Activated naive CD4-positive, alpha-beta T cell treated with anti-CD3 and anti-CD28 coated beads, Interleukin-2, amount 10 ng/mL, durations not matched to agents 7 days and 5 days (primary cell): ENCODE measurements at regions of chr15 and their contacts with region 1.

Region 1: GRCh38 chr15:40440743-40441564 is at the start of gene BAHD1:
- DNase-seq: peak; percentile 98
- H3K4me3 Mint-ChIP-seq: peak within 1 kb of the TSS; percentile 90
- H3K27ac Mint-ChIP-seq: peak within 1 kb of the TSS; percentile 74
- H3K4me1 Mint-ChIP-seq: peaks cover 52% of the 10 kb centered on the region
- H3K27me3 Mint-ChIP-seq: peaks cover 70% of the 10 kb centered on the region

Region 2: GRCh38 chr15:40454904-40455391 is 14.0 kb after region 1 on chr15:
- CTCF ChIA-PET with region 1: interaction called, 19 read pairs
- DNase-seq: peak; percentile 51
- H3K4me3 Mint-ChIP-seq: peak overlapping the region; percentile 62
- H3K27ac Mint-ChIP-seq: peak overlapping the region; percentile 90
- H3K4me1 Mint-ChIP-seq: peaks cover 75% of the 10 kb centered on the region
- H3K27me3 Mint-ChIP-seq: no peaks in the 10 kb centered on the region

Region 3: GRCh38 chr15:40506964-40507571 is 66.1 kb after region 1 on chr15:
- CTCF ChIA-PET with region 1: interaction called, 11 read pairs
- DNase-seq: peak; percentile 78
- H3K4me3 Mint-ChIP-seq: peak overlapping the region; percentile 21
- H3K27ac Mint-ChIP-seq: no peak overlapping the region
- H3K4me1 Mint-ChIP-seq: peaks cover 23% of the 10 kb centered on the region
- H3K27me3 Mint-ChIP-seq: peaks cover 78% of the 10 kb centered on the region